Left colon (tissue), 2 donors: ENCODE measurements at regions of chr1 and their contacts with region 1.

Region 1: DNA sequence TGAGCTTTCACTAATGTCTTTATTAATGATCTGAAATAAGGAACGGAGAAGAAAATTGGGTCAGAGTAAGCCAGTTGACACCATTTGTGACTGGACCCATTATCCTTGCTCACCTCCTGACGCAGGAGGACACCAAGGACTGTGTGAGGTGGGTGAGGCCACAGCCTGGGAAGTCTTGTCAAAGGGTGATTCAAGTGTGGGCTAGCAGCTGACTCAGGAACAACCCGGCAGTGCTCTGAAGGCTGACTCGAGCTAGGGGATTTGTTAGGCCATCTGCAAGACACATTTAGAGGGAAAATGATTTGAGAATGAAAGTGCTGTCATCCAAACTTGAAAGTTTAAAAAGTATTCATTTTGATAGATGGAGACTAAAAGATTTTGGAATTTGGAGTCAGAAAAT is 21.2 kb downstream of the PRRX1 start:
- DNase-seq: no peak
- ATAC-seq: no peak

Region 2: GRCh38 chr1:170929835-170930554 is 244.8 kb after region 1 on chr1:
- intact Hi-C with region 1: loop called in 1 of 2 experiments (anchors 10 kb)
- DNase-seq: no peak
- ATAC-seq: peak; percentile 86

Region 3: DNA sequence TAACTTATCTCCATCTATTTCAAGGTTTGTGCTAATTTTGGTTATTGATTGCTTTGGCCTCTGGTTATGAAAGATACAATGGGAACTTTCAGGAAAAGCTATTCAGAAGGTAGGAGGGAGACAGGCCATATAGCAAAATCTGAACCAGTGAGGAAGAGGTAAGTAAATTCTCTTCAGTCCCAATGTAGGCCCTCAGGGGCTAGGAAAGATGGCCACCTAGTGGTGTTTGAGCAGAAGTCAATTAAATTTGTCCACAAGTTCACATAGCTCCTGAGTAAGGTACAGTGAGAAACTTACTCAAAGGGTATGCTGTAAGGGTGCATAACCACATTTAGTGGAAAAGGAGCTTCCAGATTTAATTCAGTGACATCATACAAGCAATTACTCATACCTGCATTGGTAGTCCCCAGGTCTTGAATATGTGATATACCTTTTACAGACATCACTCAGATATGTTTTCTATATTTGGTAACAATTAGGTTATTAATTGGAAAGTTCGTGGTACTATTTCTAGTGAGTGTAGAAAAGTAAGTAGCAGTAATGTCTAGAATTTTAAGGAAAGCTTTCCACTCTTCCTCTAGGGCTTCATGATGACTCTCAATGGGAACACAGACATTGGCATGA is 541.7 kb after region 1 on chr1:
- intact Hi-C with region 1: no loop called
- DNase-seq: peak in 1 of 2 donors; percentile 26
- ATAC-seq: peak; percentile 94